CD14-positive monocyte (primary cell): ENCODE measurements at regions of chr9 and their contacts with region 1.

Region 1: DNA sequence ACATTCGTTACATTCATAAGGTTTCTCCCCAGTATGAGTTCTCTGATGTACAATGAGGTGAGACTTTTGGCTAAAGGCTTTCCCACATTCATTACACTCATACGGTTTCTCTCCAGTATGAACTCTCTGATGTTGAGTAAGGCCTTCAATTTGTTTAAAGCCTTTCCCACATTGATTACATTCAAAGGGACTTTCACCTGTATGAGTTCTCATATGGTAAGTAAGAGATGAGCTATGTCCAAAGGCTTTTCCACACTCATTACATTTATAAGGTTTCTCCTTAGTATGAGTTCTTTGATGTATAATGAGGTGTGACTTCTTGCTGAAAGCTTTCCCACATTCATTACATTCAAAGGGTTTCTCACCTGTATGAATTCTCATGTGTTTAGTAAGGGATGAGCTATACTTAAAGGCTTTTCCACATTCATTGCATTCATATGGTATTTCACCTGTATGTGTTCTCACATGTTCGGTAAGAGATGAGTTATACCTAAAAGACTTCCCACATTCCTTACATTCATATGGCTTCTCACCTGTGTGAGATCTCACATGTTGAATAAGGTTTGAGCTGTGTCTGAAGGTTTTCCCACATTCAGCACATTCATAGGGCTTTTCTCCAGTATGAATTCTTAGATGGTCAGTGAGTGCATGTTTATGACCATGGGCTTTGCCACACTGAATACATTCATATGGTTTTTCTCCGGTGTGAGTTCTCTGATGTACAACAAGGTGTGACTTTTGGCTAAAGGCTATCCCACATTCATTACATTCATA is 13.5 kb downstream of the ZFP37 start:
- DNase-seq: no peak
- H3K4me3 ChIP-seq: peak overlapping the region in 1 of 3 experiments; percentile 6
- H3K4me3 Mint-ChIP-seq: no peak overlapping the region
- H3K27ac ChIP-seq: no peak overlapping the region
- H3K27ac Mint-ChIP-seq: no peak overlapping the region
- H3K4me1 ChIP-seq: no peaks in the 10 kb centered on the region
- H3K4me1 Mint-ChIP-seq: no peaks in the 10 kb centered on the region
- H3K27me3 ChIP-seq: no peaks in the 10 kb centered on the region
- H3K27me3 Mint-ChIP-seq: no peaks in the 10 kb centered on the region
- CTCF ChIP-seq: no peak

Region 2: DNA sequence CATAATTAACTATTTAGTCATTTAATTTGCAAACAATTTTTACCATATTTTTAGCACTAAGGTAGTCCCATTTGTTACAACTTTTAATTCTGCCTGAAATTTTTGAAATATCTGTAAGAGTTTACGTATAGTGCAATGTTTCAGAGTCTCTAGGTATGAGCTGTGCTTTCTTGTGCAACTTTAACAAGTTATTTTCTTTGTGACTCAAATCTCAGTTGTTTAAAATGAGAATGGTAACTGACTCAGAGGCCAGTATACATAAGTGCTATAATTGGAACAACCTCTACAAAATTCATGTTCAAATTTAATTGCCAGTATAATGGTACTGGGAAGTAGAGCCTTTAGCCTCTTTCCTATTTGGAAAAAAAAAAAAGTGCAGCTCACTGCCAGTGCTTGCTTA is 16.9 kb before region 1 on chr9:
- intact Hi-C with region 1: no loop called
- DNase-seq: no peak
- H3K4me3 ChIP-seq: no peak overlapping the region
- H3K4me3 Mint-ChIP-seq: no peak overlapping the region
- H3K27ac ChIP-seq: no peak overlapping the region
- H3K27ac Mint-ChIP-seq: no peak overlapping the region
- H3K4me1 ChIP-seq: no peaks in the 10 kb centered on the region
- H3K4me1 Mint-ChIP-seq: no peaks in the 10 kb centered on the region
- H3K27me3 ChIP-seq: no peaks in the 10 kb centered on the region
- H3K27me3 Mint-ChIP-seq: peaks cover 0 to 2% (median 0%) of the 10 kb centered on the region in 3 donors
- CTCF ChIP-seq: no peak

Region 3: GRCh38 chr9:113095561-113095960 is 52.5 kb after region 1 on chr9:
- intact Hi-C with region 1: loop called in 1 of 2 experiments (anchors 10 kb)
- DNase-seq: no peak
- H3K4me3 ChIP-seq: no peak overlapping the region
- H3K4me3 Mint-ChIP-seq: no peak overlapping the region
- H3K27ac ChIP-seq: no peak overlapping the region
- H3K27ac Mint-ChIP-seq: no peak overlapping the region
- H3K4me1 ChIP-seq: no peaks in the 10 kb centered on the region
- H3K4me1 Mint-ChIP-seq: no peaks in the 10 kb centered on the region
- H3K27me3 ChIP-seq: peaks cover 40 to 43% of the 10 kb centered on the region in 2 donors
- H3K27me3 Mint-ChIP-seq: peaks cover 22 to 45% (median 37%) of the 10 kb centered on the region in 3 donors
- CTCF ChIP-seq: no peak